ENCODE measurements at regions of chr2 and their contacts with region 1.

Region 1: DNA sequence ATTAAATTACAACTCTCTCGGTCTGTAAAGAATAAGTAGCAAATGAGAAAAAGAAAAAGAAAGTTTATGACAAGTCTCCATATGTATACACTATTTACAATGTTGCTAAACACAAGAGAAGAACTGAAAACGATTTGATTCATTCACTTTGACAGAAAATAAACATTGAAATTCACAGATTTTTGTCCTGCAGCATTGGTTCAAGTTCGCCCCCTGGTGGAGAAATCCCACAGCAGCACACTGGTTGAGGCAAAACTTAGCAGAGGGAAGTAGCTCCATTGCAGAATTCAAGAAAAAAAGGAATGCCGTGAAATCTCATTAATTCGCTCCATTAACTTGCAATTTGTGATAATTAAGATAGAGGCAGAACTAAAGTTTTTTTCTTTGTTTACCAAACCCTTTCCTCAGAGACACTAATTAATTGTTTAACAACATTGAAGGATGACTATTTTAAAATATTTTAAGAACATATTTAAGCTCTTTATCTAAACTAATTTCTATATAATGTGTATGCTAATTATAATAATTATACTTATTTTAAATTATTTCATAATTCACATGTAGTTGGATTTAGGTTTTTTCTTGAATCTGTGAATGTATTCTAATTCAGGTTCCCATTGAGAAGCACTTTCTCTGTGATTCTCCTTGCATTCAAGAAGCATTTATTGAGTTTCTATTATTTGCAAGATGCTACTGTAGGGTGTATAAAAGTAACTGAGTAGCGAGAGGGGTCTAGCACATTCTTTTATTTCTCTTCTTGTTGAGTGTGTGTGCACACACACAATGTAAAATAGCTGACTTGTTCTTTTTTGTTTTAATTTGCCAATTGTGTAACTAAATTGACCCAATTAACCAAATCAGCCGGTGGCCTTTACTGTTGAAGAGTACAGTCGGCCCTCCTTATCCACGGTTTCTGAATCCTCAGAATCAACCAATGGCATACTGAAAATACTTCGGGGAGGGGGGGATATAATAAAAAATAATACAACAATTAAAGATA is 74.1 kb downstream of the COL4A3 start:
- DNase-seq: peak; percentile 31 to 69 (median 47)
- ATAC-seq: no peak
- H3K4me3 ChIP-seq: no peak overlapping the region
- H3K4me3 Mint-ChIP-seq: no peak overlapping the region
- H3K27ac ChIP-seq: no peak overlapping the region
- H3K27ac Mint-ChIP-seq: no peak overlapping the region
- H3K4me1 ChIP-seq: no peaks in the 10 kb centered on the region
- H3K4me1 Mint-ChIP-seq: no peaks in the 10 kb centered on the region
- H3K27me3 ChIP-seq: no peaks in the 10 kb centered on the region
- H3K27me3 Mint-ChIP-seq: peaks cover 19% of the 10 kb centered on the region
- CTCF ChIP-seq: peak; percentile 98

Region 2: GRCh38 chr2:225668606-225669266 is 1569.8 kb before region 1 on chr2:
- CTCF ChIA-PET with region 1: no interaction called
- POLR2A ChIA-PET with region 1: no interaction called
- intact Hi-C with region 1: loop called (anchors 1 to 2 kb)
- DNase-seq: peak in 5 of 14 experiments; percentile 3 to 68 (median 51)
- ATAC-seq: peak; percentile 81
- H3K4me3 ChIP-seq: no peak overlapping the region
- H3K4me3 Mint-ChIP-seq: no peak overlapping the region
- H3K27ac ChIP-seq: no peak overlapping the region
- H3K27ac Mint-ChIP-seq: no peak overlapping the region
- H3K4me1 ChIP-seq: no peaks in the 10 kb centered on the region
- H3K4me1 Mint-ChIP-seq: no peaks in the 10 kb centered on the region
- H3K27me3 ChIP-seq: no peaks in the 10 kb centered on the region
- H3K27me3 Mint-ChIP-seq: peaks cover 16% of the 10 kb centered on the region
- CTCF ChIP-seq: peak; percentile 71

Region 3: GRCh38 chr2:225889446-225889850 is 1349.1 kb before region 1 on chr2:
- CTCF ChIA-PET with region 1: no interaction called
- POLR2A ChIA-PET with region 1: no interaction called
- intact Hi-C with region 1: loop called in 1 of 2 experiments (anchors 10 kb)
- DNase-seq: peak in 3 of 14 experiments; percentile 29 to 31 (median 29)
- ATAC-seq: no peak
- H3K4me3 ChIP-seq: no peak overlapping the region
- H3K4me3 Mint-ChIP-seq: no peak overlapping the region
- H3K27ac ChIP-seq: no peak overlapping the region
- H3K27ac Mint-ChIP-seq: no peak overlapping the region
- H3K4me1 ChIP-seq: no peaks in the 10 kb centered on the region
- H3K4me1 Mint-ChIP-seq: no peaks in the 10 kb centered on the region
- H3K27me3 ChIP-seq: peaks cover 0 to 3% of the 10 kb centered on the region in 2 experiments
- H3K27me3 Mint-ChIP-seq: peaks cover 8% of the 10 kb centered on the region
- CTCF ChIP-seq: peak; percentile 70

Region 4: GRCh38 chr2:226387499-226387942 is 851.0 kb before region 1 on chr2:
- CTCF ChIA-PET with region 1: no interaction called
- POLR2A ChIA-PET with region 1: no interaction called
- intact Hi-C with region 1: no loop called
- DNase-seq: no peak
- ATAC-seq: no peak
- H3K4me3 ChIP-seq: no peak overlapping the region
- H3K4me3 Mint-ChIP-seq: no peak overlapping the region
- H3K27ac ChIP-seq: no peak overlapping the region
- H3K27ac Mint-ChIP-seq: no peak overlapping the region
- H3K4me1 ChIP-seq: no peaks in the 10 kb centered on the region
- H3K4me1 Mint-ChIP-seq: no peaks in the 10 kb centered on the region
- H3K27me3 ChIP-seq: no peaks in the 10 kb centered on the region
- H3K27me3 Mint-ChIP-seq: peaks cover 8% of the 10 kb centered on the region
- CTCF ChIP-seq: no peak

Region 5: GRCh38 chr2:227163998-227164762 is 74.4 kb before region 1 on chr2 and contains the starts of genes COL4A3 and COL4A4:
- CTCF ChIA-PET with region 1: no interaction called
- POLR2A ChIA-PET with region 1: no interaction called
- intact Hi-C with region 1: no loop called
- DNase-seq: peak in 2 of 14 experiments; percentile 3 to 9
- ATAC-seq: no peak
- H3K4me3 ChIP-seq: peak within 1 kb of the TSS; percentile 24
- H3K4me3 Mint-ChIP-seq: peak within 1 kb of the TSS; percentile 30
- H3K27ac ChIP-seq: no peak within 1 kb of the TSS
- H3K27ac Mint-ChIP-seq: no peak within 1 kb of the TSS
- H3K4me1 ChIP-seq: peaks cover 14% of the 10 kb centered on the region
- H3K4me1 Mint-ChIP-seq: peaks cover 4% of the 10 kb centered on the region
- H3K27me3 ChIP-seq: peaks cover 23 to 54% of the 10 kb centered on the region in 2 experiments
- H3K27me3 Mint-ChIP-seq: peaks cover 74% of the 10 kb centered on the region
- CTCF ChIP-seq: no peak
- total RNA-seq, gene COL4A3: not detected
- total RNA-seq, gene COL4A4: not detected

Region 6: GRCh38 chr2:227228061-227228667 is 10.4 kb before region 1 on chr2:
- CTCF ChIA-PET with region 1: interaction called, 11 read pairs
- POLR2A ChIA-PET with region 1: no interaction called
- intact Hi-C with region 1: no loop called
- DNase-seq: no peak
- ATAC-seq: no peak
- H3K4me3 ChIP-seq: no peak overlapping the region
- H3K4me3 Mint-ChIP-seq: no peak overlapping the region
- H3K27ac ChIP-seq: no peak overlapping the region
- H3K27ac Mint-ChIP-seq: no peak overlapping the region
- H3K4me1 ChIP-seq: no peaks in the 10 kb centered on the region
- H3K4me1 Mint-ChIP-seq: no peaks in the 10 kb centered on the region
- H3K27me3 ChIP-seq: peaks cover 0 to 5% of the 10 kb centered on the region in 2 experiments
- H3K27me3 Mint-ChIP-seq: peaks cover 21% of the 10 kb centered on the region
- CTCF ChIP-seq: no peak

Measured in CD4-positive, alpha-beta T cell (primary cell).